Sciatic nerve (tissue), 2 donors: ENCODE measurements at regions of chr12 and their contacts with region 1.

Region 1: GRCh38 chr12:96208801-96209549 is 14.8 kb downstream of the ELK3 start:
- DNase-seq: no peak
- ATAC-seq: peak; percentile 57

Region 2: DNA sequence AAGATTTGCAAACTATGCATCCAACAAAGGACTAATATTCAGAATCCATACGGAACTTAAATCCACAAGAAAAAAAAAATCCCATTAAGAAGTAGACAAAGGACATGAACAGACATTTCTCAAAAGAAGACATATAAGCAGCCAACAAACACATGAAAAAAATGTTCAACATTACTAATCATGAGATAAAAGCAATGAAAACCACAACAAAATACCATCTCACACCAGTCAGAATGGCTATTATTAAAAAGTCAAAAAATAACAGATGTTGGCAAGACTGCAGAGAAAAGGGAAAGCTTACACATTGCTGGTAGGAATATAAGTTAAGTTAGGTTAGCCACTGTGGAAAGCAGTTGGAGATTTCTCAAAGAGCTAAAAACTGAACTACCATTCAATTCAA is 175.0 kb after region 1 on chr12:
- intact Hi-C with region 1: no loop called
- DNase-seq: no peak
- ATAC-seq: no peak

Region 3: DNA sequence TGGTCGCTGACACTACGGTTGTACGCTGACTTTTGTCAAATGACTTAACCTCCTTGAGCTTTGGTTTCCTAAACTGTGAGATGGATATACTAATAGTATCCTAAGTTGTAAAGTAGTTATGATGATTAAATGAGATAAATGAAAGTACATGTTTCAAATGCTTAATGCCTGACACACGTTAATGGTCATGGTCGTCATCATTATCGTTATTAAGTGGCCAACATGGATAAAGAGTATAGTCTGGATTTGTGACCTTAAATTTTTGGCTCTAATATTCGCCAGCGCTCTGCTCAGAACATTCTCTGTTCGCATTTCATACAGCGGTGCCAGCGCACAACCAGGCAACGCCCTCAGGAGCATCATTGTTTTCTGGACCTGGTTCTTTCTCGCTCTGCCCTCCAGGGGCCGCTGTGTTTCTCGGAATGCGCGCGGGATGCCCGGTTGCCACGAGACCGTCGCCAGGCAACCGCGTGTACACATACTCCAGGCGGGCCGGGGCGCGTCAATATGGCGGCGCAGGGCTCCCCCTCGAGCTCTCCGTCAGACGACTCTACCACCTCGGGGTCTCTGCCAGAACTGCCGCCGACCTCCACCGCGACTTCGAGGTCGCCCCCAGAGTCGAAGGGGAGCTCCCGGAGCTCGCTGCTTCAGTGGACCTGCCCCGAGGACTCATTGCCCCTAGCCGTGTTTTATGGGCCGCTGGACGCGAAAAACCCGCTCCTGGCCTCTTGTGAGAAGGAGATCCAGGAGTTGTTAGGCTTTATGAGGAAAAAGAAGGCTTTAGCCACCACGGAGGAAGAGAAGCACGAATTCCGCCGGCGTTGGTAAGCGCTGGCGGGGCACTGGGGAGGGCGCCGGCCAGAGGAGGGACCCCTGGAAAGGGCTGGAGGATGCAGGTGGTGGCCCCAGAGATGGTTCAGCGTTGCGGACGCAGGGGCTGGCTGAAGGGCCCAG is 280.4 kb after region 1 on chr12 and contains the start of gene CFAP54:
- intact Hi-C with region 1: loop called (anchors 10 kb)
- DNase-seq: peak; percentile 95
- ATAC-seq: peak; percentile 99
- total RNA-seq, gene CFAP54: 1.2 TPM